Caco-2 (cell line): ENCODE measurements at regions of chr9 and their contacts with region 1.

Region 1: DNA sequence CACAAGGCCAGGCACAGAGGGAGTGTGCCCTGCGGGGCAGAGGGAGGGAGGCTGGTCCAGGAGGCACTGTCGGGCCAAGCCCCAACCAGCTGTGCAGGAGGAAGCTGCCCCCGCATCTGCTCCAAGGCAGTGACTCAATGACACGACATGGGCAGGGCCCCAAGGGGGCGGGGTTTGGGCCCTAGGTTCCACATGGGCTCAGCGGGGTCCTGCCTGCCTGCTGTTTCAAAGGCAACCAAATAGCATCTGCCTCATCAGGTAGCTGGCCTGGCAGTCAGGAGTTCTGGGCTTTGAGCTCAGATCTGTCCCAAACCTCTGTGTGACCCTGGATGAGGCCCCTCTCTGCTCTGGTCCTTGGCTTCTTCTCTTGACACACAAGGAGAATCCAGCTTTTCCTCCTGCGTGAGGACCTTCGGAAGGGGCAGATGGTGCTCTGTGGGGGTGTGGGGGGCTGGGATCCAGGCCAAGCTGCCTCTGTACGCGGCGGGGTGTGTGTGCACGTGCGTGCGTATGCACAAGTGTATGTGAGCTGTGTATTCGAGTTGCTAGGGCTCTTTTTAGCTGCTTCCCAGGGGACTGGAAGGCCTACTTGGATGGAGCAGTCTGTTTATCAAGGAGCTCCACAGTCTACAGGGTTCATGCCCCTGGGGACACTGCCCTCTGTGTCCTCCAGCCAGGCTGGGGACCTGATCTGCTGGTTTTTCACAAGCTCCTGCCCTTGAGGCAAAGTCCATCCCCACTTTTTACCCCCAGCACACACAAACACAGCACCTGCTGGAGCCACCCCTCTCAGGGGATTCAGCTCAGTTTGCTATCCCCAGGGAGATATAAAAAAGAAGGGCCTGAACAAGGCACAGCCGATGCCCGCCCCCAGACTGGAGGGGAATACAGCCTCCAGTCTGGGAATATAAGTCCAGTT is 138.9 kb downstream of the RGS3 start:
- DNase-seq: peak; percentile 71 to 81
- H3K4me3 ChIP-seq: no peak overlapping the region
- H3K4me3 Mint-ChIP-seq: no peak overlapping the region
- H3K27ac Mint-ChIP-seq: peak overlapping the region; percentile 79
- H3K4me1 ChIP-seq: peaks cover 17% of the 10 kb centered on the region
- H3K4me1 Mint-ChIP-seq: peaks cover 22% of the 10 kb centered on the region
- H3K27me3 ChIP-seq: no peaks in the 10 kb centered on the region
- H3K27me3 Mint-ChIP-seq: no peaks in the 10 kb centered on the region
- CTCF ChIP-seq: no peak

Region 2: DNA sequence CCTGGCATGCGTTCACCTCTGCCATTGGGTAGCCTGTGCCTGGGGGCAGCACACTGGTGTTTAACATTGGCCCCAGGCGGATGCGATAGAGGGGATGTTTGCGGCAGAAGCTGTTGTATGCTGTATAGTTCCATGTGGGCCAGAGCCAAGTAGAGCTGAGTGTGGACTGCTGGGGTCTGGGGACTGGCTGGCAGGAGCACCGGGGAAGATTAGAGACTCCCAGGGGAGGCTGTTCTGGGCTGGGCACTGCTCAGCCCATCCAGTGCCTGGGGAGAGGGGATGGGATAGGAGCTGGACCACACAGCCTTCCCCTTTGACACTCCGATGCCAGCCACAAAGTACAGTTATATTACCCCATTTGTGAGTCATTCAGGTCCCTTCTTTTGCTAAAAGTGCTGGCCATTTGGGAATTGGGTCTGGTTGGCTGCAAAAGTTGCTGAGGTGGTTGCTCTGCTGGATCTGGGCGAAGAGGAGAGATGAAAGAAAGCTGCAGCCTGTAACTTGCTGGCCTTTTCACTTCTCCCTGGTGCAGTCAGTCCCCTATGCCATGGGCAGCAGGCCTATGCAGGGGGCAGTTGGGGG is 65.1 kb before region 1 on chr9:
- CTCF ChIA-PET with region 1: no interaction called
- POLR2A ChIA-PET with region 1: interaction called, 12 read pairs
- intact Hi-C with region 1: no loop called
- DNase-seq: peak in 1 of 2 experiments; percentile 2
- H3K4me3 ChIP-seq: no peak overlapping the region
- H3K4me3 Mint-ChIP-seq: no peak overlapping the region
- H3K27ac Mint-ChIP-seq: no peak overlapping the region
- H3K4me1 ChIP-seq: peaks cover 7% of the 10 kb centered on the region; the same call in 1 of the 2 replicates
- H3K4me1 Mint-ChIP-seq: no peaks in the 10 kb centered on the region
- H3K27me3 ChIP-seq: no peaks in the 10 kb centered on the region
- H3K27me3 Mint-ChIP-seq: no peaks in the 10 kb centered on the region
- CTCF ChIP-seq: no peak

Region 3: DNA sequence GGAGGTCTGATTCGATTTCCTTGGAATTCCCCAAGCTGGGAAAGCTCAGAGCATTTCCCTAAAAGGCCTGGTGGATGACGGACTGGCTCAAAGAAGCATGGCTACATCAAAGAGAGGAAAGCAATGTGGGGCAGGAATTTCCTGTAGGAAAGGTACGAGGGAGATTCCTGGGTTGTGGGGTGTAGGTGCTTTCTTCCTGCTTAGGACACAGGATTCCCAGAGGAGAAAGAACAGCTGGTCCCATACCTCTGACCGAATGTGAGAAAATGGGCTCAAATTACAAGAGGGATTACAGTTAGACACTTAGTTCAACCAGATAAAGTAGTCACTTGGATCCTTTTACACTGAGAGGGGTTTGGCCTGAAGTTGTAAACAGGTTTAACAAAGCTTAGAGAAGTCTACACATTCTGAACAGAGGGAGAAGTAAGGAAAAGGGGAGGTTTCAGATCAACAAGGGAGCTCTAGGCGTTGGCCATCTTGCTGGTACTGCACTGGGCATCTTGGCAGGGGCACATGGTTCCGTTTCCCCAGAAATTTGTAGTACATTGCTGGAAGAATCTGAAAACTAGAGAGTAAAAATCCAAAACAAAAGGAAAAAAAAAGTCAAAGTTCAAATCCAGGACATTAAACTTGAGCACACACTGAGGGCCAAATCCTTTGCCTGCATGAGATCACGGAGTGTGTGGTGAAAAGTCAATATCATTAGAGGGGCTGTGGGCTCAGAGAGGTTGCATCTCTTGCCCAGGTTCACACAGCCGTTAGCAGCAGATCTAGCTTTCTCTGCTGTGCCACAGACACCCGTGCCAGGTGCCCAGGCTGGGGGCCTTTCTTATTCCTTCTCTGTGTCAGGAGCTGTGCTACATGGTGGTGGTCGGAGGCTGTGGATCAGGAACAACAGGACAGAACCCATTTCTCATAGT is 32.5 kb after region 1 on chr9:
- CTCF ChIA-PET with region 1: no interaction called
- POLR2A ChIA-PET with region 1: no interaction called
- intact Hi-C with region 1: loop called (anchors 1 kb)
- DNase-seq: peak in 1 of 2 experiments; percentile 7
- H3K4me3 ChIP-seq: no peak overlapping the region
- H3K4me3 Mint-ChIP-seq: no peak overlapping the region
- H3K27ac Mint-ChIP-seq: no peak overlapping the region
- H3K4me1 ChIP-seq: peaks cover 11% of the 10 kb centered on the region
- H3K4me1 Mint-ChIP-seq: peaks cover 13% of the 10 kb centered on the region
- H3K27me3 ChIP-seq: no peaks in the 10 kb centered on the region
- H3K27me3 Mint-ChIP-seq: no peaks in the 10 kb centered on the region
- CTCF ChIP-seq: no peak

Region 4: GRCh38 chr9:113648586-113649453 is 46.4 kb after region 1 on chr9:
- CTCF ChIA-PET with region 1: interaction called, 191 read pairs
- POLR2A ChIA-PET with region 1: interaction called, 4 read pairs
- intact Hi-C with region 1: loop called (anchors 2 kb)
- DNase-seq: no peak
- H3K4me3 ChIP-seq: no peak overlapping the region
- H3K4me3 Mint-ChIP-seq: no peak overlapping the region
- H3K27ac Mint-ChIP-seq: no peak overlapping the region
- H3K4me1 ChIP-seq: no peaks in the 10 kb centered on the region; the same call in 1 of the 2 replicates
- H3K4me1 Mint-ChIP-seq: no peaks in the 10 kb centered on the region
- H3K27me3 ChIP-seq: no peaks in the 10 kb centered on the region
- H3K27me3 Mint-ChIP-seq: peaks cover 6% of the 10 kb centered on the region
- CTCF ChIP-seq: no peak

Region 5: GRCh38 chr9:113657703-113658544 is 55.5 kb after region 1 on chr9:
- CTCF ChIA-PET with region 1: interaction called, 191 read pairs
- POLR2A ChIA-PET with region 1: no interaction called
- intact Hi-C with region 1: loop called (anchors 1 kb)
- DNase-seq: peak; percentile 84 to 87
- H3K4me3 ChIP-seq: no peak overlapping the region
- H3K4me3 Mint-ChIP-seq: no peak overlapping the region
- H3K27ac Mint-ChIP-seq: no peak overlapping the region
- H3K4me1 ChIP-seq: no peaks in the 10 kb centered on the region; the same call in 1 of the 2 replicates
- H3K4me1 Mint-ChIP-seq: no peaks in the 10 kb centered on the region
- H3K27me3 ChIP-seq: no peaks in the 10 kb centered on the region
- H3K27me3 Mint-ChIP-seq: peaks cover 7% of the 10 kb centered on the region
- CTCF ChIP-seq: peak; percentile 93 to 97